ENCODE measurements at regions of chr19 and their contacts with region 1.

Region 1: GRCh38 chr19:38559428-38560401 is 58.0 kb downstream of the MAP4K1 start:
- DNase-seq: no peak
- ATAC-seq: no peak
- H3K4me3 ChIP-seq: no peak overlapping the region
- H3K27ac ChIP-seq: peak overlapping the region in 1 of 4 donors; percentile 28
- H3K4me1 ChIP-seq: no peaks in the 10 kb centered on the region
- H3K27me3 ChIP-seq: no peaks in the 10 kb centered on the region
- CTCF ChIP-seq: no peak
- POLR2A ChIP-seq: no peak

Region 2: GRCh38 chr19:38496603-38497487 is 62.9 kb before region 1 on chr19:
- in situ Hi-C with region 1: no loop called
- intact Hi-C with region 1: loop called (anchors 2 kb)
- DNase-seq: no peak
- ATAC-seq: no peak
- H3K4me3 ChIP-seq: no peak overlapping the region
- H3K27ac ChIP-seq: peak overlapping the region in 1 of 4 donors; percentile 39
- H3K4me1 ChIP-seq: no peaks in the 10 kb centered on the region
- H3K27me3 ChIP-seq: no peaks in the 10 kb centered on the region
- CTCF ChIP-seq: no peak
- POLR2A ChIP-seq: no peak

Measured in gastrocnemius medialis (tissue), 4 donors.